ENCODE measurements at regions of chr14 and their contacts with region 1.

Region 1: GRCh38 chr14:56339855-56340701 is 221.9 kb downstream of the PELI2 start:
- DNase-seq: peak; percentile 91
- H3K4me3 ChIP-seq: no peak overlapping the region
- H3K27me3 ChIP-seq: no peaks in the 10 kb centered on the region
- CTCF ChIP-seq: peak; percentile 95

Region 2: GRCh38 chr14:55707365-55707804 is 632.7 kb before region 1 on chr14:
- CTCF ChIA-PET with region 1: interaction called, 14 read pairs
- POLR2A ChIA-PET with region 1: no interaction called
- DNase-seq: no peak
- H3K4me3 ChIP-seq: no peak overlapping the region
- H3K27me3 ChIP-seq: no peaks in the 10 kb centered on the region
- CTCF ChIP-seq: peak; percentile 68

Region 3: DNA sequence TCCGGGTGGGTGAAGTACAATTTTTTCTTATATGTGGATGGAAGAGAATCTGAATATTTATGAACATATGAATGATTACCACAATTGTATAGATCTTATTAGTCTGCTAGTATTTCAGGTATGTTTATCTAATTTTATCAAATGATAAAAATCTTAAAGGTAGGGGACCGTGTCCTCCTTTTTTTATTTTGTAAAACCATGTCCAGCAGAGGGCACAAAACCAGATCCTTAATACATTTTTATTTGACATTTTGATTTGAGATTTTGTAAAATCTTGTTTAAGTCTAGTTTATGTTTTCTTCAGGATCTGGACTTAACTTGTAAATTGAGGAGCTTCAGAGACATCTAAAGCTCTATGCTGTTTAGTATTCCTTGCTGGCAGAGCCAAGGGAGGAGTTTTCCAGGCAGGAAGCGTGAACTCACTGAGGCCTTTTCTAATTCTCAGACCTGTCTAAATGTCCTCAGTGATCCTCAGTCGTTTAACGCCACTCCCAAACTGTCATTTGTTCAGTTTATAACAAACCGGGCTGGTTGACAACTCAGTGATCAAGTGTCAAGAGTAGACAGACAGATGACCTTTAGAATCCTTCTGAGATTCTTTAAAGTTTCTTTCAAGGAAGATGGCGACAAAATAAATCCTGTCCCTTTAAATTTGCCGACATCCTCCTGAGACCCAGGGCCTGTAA is 496.2 kb before region 1 on chr14:
- CTCF ChIA-PET with region 1: interaction called, 10 read pairs
- POLR2A ChIA-PET with region 1: no interaction called
- DNase-seq: no peak
- H3K4me3 ChIP-seq: no peak overlapping the region
- H3K27me3 ChIP-seq: no peaks in the 10 kb centered on the region
- CTCF ChIP-seq: 0 out of 2 replicates have a peak, but pooled peaks have one; percentile 2

Region 4: GRCh38 chr14:56117765-56118610 is 222.1 kb before region 1 on chr14 and contains the start of gene PELI2:
- CTCF ChIA-PET with region 1: interaction called, 11 read pairs
- POLR2A ChIA-PET with region 1: no interaction called
- DNase-seq: no peak
- H3K4me3 ChIP-seq: peak within 1 kb of the TSS; percentile 51
- H3K27me3 ChIP-seq: peaks cover 4% of the 10 kb centered on the region
- CTCF ChIP-seq: peak; percentile 8; the same call in 1 of the 2 replicates
- polyA plus RNA-seq, gene PELI2: 8.5 and 10.5 TPM in 2 replicates

Region 5: GRCh38 chr14:56524971-56525677 is 185.0 kb after region 1 on chr14:
- CTCF ChIA-PET with region 1: no interaction called
- POLR2A ChIA-PET with region 1: no interaction called
- DNase-seq: no peak
- H3K4me3 ChIP-seq: no peak overlapping the region
- H3K27me3 ChIP-seq: no peaks in the 10 kb centered on the region
- CTCF ChIP-seq: no peak

Measured in BJ (cell line).